ENCODE measurements at regions of chr19 and their contacts with region 1.

Region 1: DNA sequence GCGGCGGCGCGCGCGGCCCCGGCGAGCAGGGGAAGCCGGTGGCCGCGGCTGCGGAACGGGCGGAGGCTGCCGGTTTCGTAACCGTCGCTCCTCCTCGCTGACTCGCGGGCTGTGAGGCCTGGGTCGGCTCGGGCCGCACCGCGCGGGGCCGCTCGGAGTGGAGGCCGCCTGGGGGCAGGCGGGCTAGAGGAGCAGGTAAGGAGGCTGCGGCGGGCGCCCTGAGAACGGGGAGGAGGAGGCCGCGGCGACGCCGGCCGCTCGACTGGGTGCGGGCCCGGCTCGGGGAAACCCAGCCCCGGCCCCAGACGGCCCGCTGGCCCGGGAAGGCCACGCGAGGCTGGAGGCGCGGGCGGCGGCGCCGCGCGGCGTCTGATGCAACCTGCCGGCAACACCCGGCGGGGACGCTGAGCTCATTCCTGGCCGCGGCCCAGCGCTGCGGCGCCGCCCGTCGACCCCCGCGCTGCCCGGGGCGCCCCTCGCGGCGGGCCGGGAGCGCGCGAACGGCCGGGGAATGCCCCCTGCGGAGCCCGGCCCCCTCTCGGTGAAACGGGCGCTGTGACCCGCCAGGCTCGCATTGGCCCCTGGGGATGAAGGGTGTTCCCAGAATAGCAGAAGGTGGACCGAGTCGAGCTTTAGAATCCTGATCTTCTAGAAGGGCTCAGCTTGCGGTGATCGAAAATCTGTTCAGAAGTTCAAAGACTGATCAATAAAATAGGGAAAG is at the start of gene CEBPG:
- DNase-seq: peak; percentile 88
- H3K4me3 ChIP-seq: peak within 1 kb of the TSS; percentile 78 to 83
- H3K27ac ChIP-seq: peak within 1 kb of the TSS; percentile 89 to 90
- H3K4me1 ChIP-seq: peaks cover 13 to 20% of the 10 kb centered on the region in 2 experiments; a peak in 3 of 4 replicates
- H3K27me3 ChIP-seq: no peaks in the 10 kb centered on the region
- CTCF ChIP-seq: peak; percentile 30; the same call in 1 of the 2 replicates
- EP300 ChIP-seq: no peak
- RAD21 ChIP-seq: no peak
- polyA plus RNA-seq, gene CEBPG: 9.1 and 9.5 TPM in 2 replicates

Region 2: GRCh38 chr19:33302175-33302973 is 71.5 kb before region 1 on chr19 and contains the start of gene CEBPA:
- CTCF ChIA-PET with region 1: interaction called, 21 read pairs
- POLR2A ChIA-PET with region 1: interaction called, 9 read pairs
- DNase-seq: peak; percentile 96
- H3K4me3 ChIP-seq: peak within 1 kb of the TSS; percentile 57 to 68
- H3K27ac ChIP-seq: no peak within 1 kb of the TSS
- H3K4me1 ChIP-seq: peaks cover 0 to 4% of the 10 kb centered on the region in 2 experiments; a peak in 1 of 4 replicates
- H3K27me3 ChIP-seq: peaks cover 54% of the 10 kb centered on the region
- CTCF ChIP-seq: peak; percentile 45
- EP300 ChIP-seq: no peak
- RAD21 ChIP-seq: peak; percentile 35; the same call in 1 of the 2 replicates
- polyA plus RNA-seq, gene CEBPA: 0.06 and 0.15 TPM in 2 replicates

Region 3: GRCh38 chr19:33388725-33389420 is 15.0 kb after region 1 on chr19:
- CTCF ChIA-PET with region 1: interaction called, 15 read pairs
- POLR2A ChIA-PET with region 1: interaction called, 10 read pairs
- DNase-seq: peak; percentile 83
- H3K4me3 ChIP-seq: no peak overlapping the region
- H3K27ac ChIP-seq: peak overlapping the region in 1 of 2 experiments; percentile 69; a peak in 2 of 4 replicates
- H3K4me1 ChIP-seq: peaks cover 0 to 47% of the 10 kb centered on the region in 2 experiments; a peak in 1 of 4 replicates
- H3K27me3 ChIP-seq: no peaks in the 10 kb centered on the region
- CTCF ChIP-seq: no peak
- EP300 ChIP-seq: no peak
- RAD21 ChIP-seq: no peak

Region 4: GRCh38 chr19:33486936-33487811 is 113.3 kb after region 1 on chr19:
- CTCF ChIA-PET with region 1: no interaction called
- POLR2A ChIA-PET with region 1: no interaction called
- DNase-seq: peak; percentile 16
- H3K4me3 ChIP-seq: no peak overlapping the region
- H3K27ac ChIP-seq: no peak overlapping the region
- H3K4me1 ChIP-seq: no peaks in the 10 kb centered on the region; a peak in 1 of 4 replicates
- H3K27me3 ChIP-seq: no peaks in the 10 kb centered on the region
- CTCF ChIP-seq: no peak
- EP300 ChIP-seq: no peak
- RAD21 ChIP-seq: no peak